CD4-positive, alpha-beta T cell (primary cell): ENCODE measurements at regions of chr19 and their contacts with region 1.

Region 1: GRCh38 chr19:41872775-41873647 is 4.1 kb upstream of the CD79A start:
- DNase-seq: peak; percentile 55 to 82 (median 66)
- ATAC-seq: no peak
- H3K4me3 ChIP-seq: no peak overlapping the region
- H3K4me3 Mint-ChIP-seq: peak overlapping the region; percentile 71
- H3K27ac ChIP-seq: peak overlapping the region; percentile 66 to 67
- H3K27ac Mint-ChIP-seq: peak overlapping the region; percentile 98
- H3K4me1 ChIP-seq: peaks cover 100% of the 10 kb centered on the region
- H3K4me1 Mint-ChIP-seq: peaks cover 80% of the 10 kb centered on the region
- H3K27me3 ChIP-seq: no peaks in the 10 kb centered on the region
- H3K27me3 Mint-ChIP-seq: no peaks in the 10 kb centered on the region
- CTCF ChIP-seq: peak; percentile 86

Region 2: GRCh38 chr19:41904118-41904870 is 31.3 kb after region 1 on chr19:
- CTCF ChIA-PET with region 1: interaction called, 5 read pairs
- POLR2A ChIA-PET with region 1: interaction called, 31 read pairs
- intact Hi-C with region 1: no loop called
- DNase-seq: no peak
- ATAC-seq: no peak
- H3K4me3 ChIP-seq: no peak overlapping the region
- H3K4me3 Mint-ChIP-seq: no peak overlapping the region
- H3K27ac ChIP-seq: no peak overlapping the region
- H3K27ac Mint-ChIP-seq: no peak overlapping the region
- H3K4me1 ChIP-seq: peaks cover 48% of the 10 kb centered on the region
- H3K4me1 Mint-ChIP-seq: peaks cover 52% of the 10 kb centered on the region
- H3K27me3 ChIP-seq: no peaks in the 10 kb centered on the region
- H3K27me3 Mint-ChIP-seq: no peaks in the 10 kb centered on the region
- CTCF ChIP-seq: no peak

Region 3: DNA sequence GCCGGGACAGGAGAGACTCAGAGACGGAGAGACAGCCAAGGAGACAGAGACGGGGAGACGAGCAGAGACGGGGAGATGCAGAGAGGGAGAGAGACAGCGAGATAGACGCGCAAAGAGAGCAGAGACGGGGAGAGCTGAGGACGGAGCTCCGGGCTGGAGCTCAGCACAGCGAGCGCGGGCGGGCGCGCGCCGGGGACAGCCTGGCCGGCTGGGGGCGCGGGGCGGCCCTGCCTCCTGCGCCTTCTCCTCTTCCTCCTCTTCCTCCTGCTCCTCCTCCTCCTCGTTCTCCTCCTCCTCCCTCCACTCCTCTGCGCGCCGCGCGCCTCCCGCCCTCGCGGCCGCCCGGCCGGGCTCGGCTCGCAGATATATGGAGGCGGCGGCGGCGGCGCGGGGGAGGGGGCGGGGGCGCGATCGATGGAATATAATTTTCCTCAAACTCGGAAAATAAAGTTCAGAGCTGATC is 55.2 kb after region 1 on chr19 and contains the start of gene ERFL:
- CTCF ChIA-PET with region 1: interaction called, 9 read pairs
- POLR2A ChIA-PET with region 1: interaction called, 14 read pairs
- intact Hi-C with region 1: loop called in 1 of 2 experiments (anchors 5 kb)
- DNase-seq: peak in 3 of 14 experiments; percentile 54 to 64 (median 56)
- ATAC-seq: peak; percentile 18
- H3K4me3 ChIP-seq: peak within 1 kb of the TSS; percentile 71
- H3K4me3 Mint-ChIP-seq: peak within 1 kb of the TSS; percentile 90
- H3K27ac ChIP-seq: peak within 1 kb of the TSS in 1 of 2 donors; percentile 42
- H3K27ac Mint-ChIP-seq: peak within 1 kb of the TSS; percentile 86
- H3K4me1 ChIP-seq: peaks cover 34% of the 10 kb centered on the region
- H3K4me1 Mint-ChIP-seq: peaks cover 35% of the 10 kb centered on the region
- H3K27me3 ChIP-seq: no peaks in the 10 kb centered on the region
- H3K27me3 Mint-ChIP-seq: no peaks in the 10 kb centered on the region
- CTCF ChIP-seq: no peak
- total RNA-seq, gene ERFL: 7.7 to 8.9 TPM

Region 4: GRCh38 chr19:41945135-41945766 is 72.2 kb after region 1 on chr19:
- CTCF ChIA-PET with region 1: interaction called, 22 read pairs
- POLR2A ChIA-PET with region 1: interaction called, 18 read pairs
- intact Hi-C with region 1: loop called in 1 of 2 experiments (anchors 1 kb)
- DNase-seq: peak; percentile 74 to 96 (median 84)
- ATAC-seq: peak; percentile 88
- H3K4me3 ChIP-seq: no peak overlapping the region
- H3K4me3 Mint-ChIP-seq: peak overlapping the region; percentile 76
- H3K27ac ChIP-seq: peak overlapping the region; percentile 60 to 67
- H3K27ac Mint-ChIP-seq: peak overlapping the region; percentile 98
- H3K4me1 ChIP-seq: peaks cover 46% of the 10 kb centered on the region
- H3K4me1 Mint-ChIP-seq: peaks cover 56% of the 10 kb centered on the region
- H3K27me3 ChIP-seq: peaks cover 0 to 3% of the 10 kb centered on the region in 2 experiments
- H3K27me3 Mint-ChIP-seq: no peaks in the 10 kb centered on the region
- CTCF ChIP-seq: no peak

Region 5: GRCh38 chr19:41959056-41960053 is 86.3 kb after region 1 on chr19 and contains the start of gene RABAC1:
- CTCF ChIA-PET with region 1: interaction called, 18 read pairs
- POLR2A ChIA-PET with region 1: interaction called, 13 read pairs
- intact Hi-C with region 1: no loop called
- DNase-seq: peak; percentile 76 to 93 (median 86)
- ATAC-seq: peak; percentile 85
- H3K4me3 ChIP-seq: peak within 1 kb of the TSS; percentile 93
- H3K4me3 Mint-ChIP-seq: peak within 1 kb of the TSS; percentile 91
- H3K27ac ChIP-seq: peak within 1 kb of the TSS; percentile 81 to 87
- H3K27ac Mint-ChIP-seq: peak within 1 kb of the TSS; percentile 78
- H3K4me1 ChIP-seq: peaks cover 24% of the 10 kb centered on the region
- H3K4me1 Mint-ChIP-seq: peaks cover 23% of the 10 kb centered on the region
- H3K27me3 ChIP-seq: no peaks in the 10 kb centered on the region
- H3K27me3 Mint-ChIP-seq: no peaks in the 10 kb centered on the region
- CTCF ChIP-seq: no peak
- total RNA-seq, gene RABAC1: 96.0 to 102 TPM

Region 6: DNA sequence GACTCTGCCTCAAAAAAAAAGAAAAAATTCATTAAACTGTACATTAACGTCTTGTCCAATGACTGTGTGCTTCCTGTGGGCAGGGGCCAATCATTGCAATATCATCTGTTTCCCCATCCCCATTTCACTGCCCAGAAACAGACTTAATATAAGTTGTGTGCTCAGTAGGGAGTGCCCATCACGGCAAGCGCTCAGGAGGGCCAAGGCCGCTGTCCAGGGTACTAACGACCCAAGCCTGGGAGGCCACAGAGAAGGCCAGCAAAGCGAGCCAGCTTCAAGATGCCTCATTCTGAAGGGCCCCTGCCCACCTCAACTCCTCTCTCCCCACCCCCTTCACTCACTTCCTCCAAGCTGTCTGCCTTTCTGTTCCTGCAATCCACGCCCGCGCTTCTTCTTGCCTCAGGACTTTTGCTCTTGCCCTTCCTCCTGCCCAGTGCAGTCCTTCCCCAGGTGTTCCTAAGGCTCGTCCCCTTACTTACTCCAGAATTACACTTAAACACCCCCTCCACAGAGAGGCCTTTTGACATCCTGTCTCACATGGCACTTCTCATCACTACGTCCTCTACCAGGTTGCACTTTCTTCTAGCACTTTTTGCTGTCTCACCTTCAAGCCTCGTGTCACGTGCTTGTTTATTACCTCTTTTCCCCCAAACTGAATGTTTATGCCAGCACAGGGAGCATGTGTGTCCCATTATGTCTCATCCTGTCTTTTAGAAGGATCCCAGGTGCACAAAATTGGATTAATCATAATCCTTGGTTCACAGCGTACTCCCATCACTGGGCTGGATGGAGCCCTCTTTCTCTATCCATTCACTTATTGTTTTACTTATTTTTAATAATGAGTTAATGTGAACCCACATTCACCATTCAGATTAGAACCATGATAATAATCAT is 270.6 kb after region 1 on chr19:
- CTCF ChIA-PET with region 1: no interaction called
- POLR2A ChIA-PET with region 1: no interaction called
- intact Hi-C with region 1: no loop called
- DNase-seq: no peak
- ATAC-seq: no peak
- H3K4me3 ChIP-seq: no peak overlapping the region
- H3K4me3 Mint-ChIP-seq: no peak overlapping the region
- H3K27ac ChIP-seq: no peak overlapping the region
- H3K27ac Mint-ChIP-seq: no peak overlapping the region
- H3K4me1 ChIP-seq: peaks cover 10% of the 10 kb centered on the region
- H3K4me1 Mint-ChIP-seq: peaks cover 13% of the 10 kb centered on the region
- H3K27me3 ChIP-seq: no peaks in the 10 kb centered on the region
- H3K27me3 Mint-ChIP-seq: no peaks in the 10 kb centered on the region
- CTCF ChIP-seq: no peak